ENCODE measurements at regions of chr2 and their contacts with region 1.

Region 1: DNA sequence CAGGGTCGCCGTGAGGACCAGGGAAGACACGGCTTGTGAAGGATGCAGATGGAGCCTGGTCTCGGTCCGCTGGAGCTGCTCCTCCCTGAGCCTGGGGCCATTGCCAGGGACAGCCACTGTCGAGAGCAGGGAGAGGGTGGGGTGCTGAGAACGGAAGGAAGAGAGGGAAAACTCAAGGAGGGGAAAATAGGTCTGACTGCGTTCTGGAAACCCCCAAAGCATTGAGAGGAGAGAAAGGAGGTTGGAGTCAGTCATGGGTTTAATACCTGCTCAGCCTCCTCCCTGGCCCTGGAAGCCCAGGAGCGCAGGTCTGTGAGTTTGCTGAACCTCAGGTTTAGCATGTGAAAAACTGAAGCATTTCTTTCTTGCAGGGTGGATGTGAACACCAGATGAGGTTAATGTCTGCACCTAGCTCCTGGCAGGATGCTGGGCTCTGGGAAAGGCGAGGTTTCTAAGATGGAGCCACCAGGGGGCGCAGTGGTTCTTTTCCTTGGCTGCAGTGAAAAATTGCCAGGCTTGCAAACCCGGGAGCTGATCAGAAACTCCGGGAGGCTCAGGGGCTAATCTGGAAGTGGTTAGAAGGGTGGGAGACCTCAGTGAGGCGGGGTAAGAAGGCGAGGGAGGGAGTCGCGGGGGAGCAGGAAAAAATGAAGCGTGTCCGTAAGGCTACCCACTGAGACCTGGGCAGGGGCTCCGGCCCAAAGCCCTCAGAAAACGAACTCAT is 33.6 kb upstream of the RNF149 start:
- DNase-seq: peak; percentile 79
- ATAC-seq: peak; percentile 49
- H3K4me3 Mint-ChIP-seq: no peak overlapping the region
- H3K27ac Mint-ChIP-seq: peak overlapping the region; percentile 45
- H3K4me1 Mint-ChIP-seq: peaks cover 22% of the 10 kb centered on the region
- H3K27me3 Mint-ChIP-seq: no peaks in the 10 kb centered on the region
- CTCF ChIP-seq: peak; percentile 90

Region 2: GRCh38 chr2:101300164-101300563 is 41.9 kb before region 1 on chr2:
- CTCF ChIA-PET with region 1: interaction called, 12 read pairs
- POLR2A ChIA-PET with region 1: no interaction called
- intact Hi-C with region 1: no loop called
- DNase-seq: peak; percentile 54
- ATAC-seq: no peak
- H3K4me3 Mint-ChIP-seq: no peak overlapping the region
- H3K27ac Mint-ChIP-seq: peak overlapping the region; percentile 3
- H3K4me1 Mint-ChIP-seq: peaks cover 76% of the 10 kb centered on the region
- H3K27me3 Mint-ChIP-seq: no peaks in the 10 kb centered on the region
- CTCF ChIP-seq: no peak

Region 3: DNA sequence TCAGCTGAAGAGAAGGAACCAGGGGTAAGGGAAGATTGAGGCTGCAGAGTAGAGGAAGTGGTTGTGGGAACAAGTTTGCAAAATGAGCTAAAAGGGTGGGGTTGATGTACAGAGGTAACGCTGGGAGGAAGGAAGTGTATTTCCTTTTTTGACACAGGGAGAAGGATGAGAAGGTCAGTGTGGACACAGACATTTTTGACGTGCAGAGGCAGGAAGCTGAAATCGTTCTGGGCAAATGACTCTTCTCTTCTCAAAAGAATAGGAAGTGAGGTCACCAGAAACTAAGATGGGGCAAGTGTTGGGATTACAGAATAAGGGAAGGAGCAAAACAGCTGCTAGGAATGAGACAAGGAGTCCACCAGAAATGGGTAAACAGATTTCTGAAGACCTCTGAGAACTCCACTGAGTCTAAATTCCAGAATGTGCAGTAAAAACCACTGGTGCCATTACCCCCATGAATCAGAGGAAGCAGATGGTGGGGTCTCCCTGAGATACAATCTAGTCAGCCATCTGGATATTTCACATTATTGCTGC is 13.5 kb before region 1 on chr2:
- CTCF ChIA-PET with region 1: interaction called, 60 read pairs
- POLR2A ChIA-PET with region 1: interaction called, 3 read pairs
- intact Hi-C with region 1: no loop called
- DNase-seq: peak; percentile 46
- ATAC-seq: peak; percentile 78
- H3K4me3 Mint-ChIP-seq: no peak overlapping the region
- H3K27ac Mint-ChIP-seq: no peak overlapping the region
- H3K4me1 Mint-ChIP-seq: peaks cover 17% of the 10 kb centered on the region
- H3K27me3 Mint-ChIP-seq: no peaks in the 10 kb centered on the region
- CTCF ChIP-seq: no peak

Region 4: DNA sequence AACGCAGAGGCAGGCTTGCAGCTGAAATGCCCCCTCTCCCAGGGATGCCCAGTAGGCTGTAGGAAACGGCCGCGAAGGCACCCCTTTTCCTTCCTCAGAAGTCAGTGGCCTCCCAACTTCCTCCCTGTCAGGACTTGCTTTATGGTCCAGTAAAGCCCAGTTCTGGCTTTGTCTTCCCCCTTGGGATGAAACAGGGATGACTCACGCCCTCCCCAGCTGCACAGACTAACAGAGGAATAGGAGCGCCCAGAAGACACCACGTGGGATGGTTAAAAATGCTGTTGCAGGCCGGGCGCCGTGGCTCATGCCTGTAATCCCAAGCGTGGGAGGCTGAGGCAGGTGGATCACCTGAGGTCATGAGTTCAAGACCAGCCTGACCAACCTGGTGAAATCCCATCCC is 38.3 kb after region 1 on chr2:
- CTCF ChIA-PET with region 1: interaction called, 51 read pairs
- POLR2A ChIA-PET with region 1: no interaction called
- intact Hi-C with region 1: loop called (anchors 5 kb)
- DNase-seq: no peak
- ATAC-seq: no peak
- H3K4me3 Mint-ChIP-seq: no peak overlapping the region
- H3K27ac Mint-ChIP-seq: no peak overlapping the region
- H3K4me1 Mint-ChIP-seq: no peaks in the 10 kb centered on the region
- H3K27me3 Mint-ChIP-seq: peaks cover 4% of the 10 kb centered on the region
- CTCF ChIP-seq: no peak

Region 5: GRCh38 chr2:101823347-101823791 is 481.3 kb after region 1 on chr2:
- CTCF ChIA-PET with region 1: interaction called, 9 read pairs
- POLR2A ChIA-PET with region 1: no interaction called
- intact Hi-C with region 1: loop called (anchors 5 kb)
- DNase-seq: peak; percentile 86
- ATAC-seq: peak; percentile 86
- H3K4me3 Mint-ChIP-seq: peak overlapping the region; percentile 29
- H3K27ac Mint-ChIP-seq: peak overlapping the region; percentile 75
- H3K4me1 Mint-ChIP-seq: peaks cover 76% of the 10 kb centered on the region
- H3K27me3 Mint-ChIP-seq: no peaks in the 10 kb centered on the region
- CTCF ChIP-seq: peak; percentile 81